Heart left ventricle (tissue), 16 donors: ENCODE measurements at regions of chr3 and their contacts with region 1.

Region 1: GRCh38 chr3:56347219-56347871 is 120.9 kb downstream of the ERC2 start:
- DNase-seq: peak in 1 of 5 donors; percentile 10
- ATAC-seq: no peak
- H3K4me3 ChIP-seq: no peak overlapping the region
- H3K27ac ChIP-seq: no peak overlapping the region
- H3K4me1 ChIP-seq: no peaks in the 10 kb centered on the region
- H3K27me3 ChIP-seq: peaks cover 0 to 5% (median 0%) of the 10 kb centered on the region in 9 donors
- CTCF ChIP-seq: peak in 6 of 12 donors; percentile 13 to 42 (median 17)
- POLR2A ChIP-seq: no peak

Region 2: GRCh38 chr3:56443372-56443771 is 96.0 kb after region 1 on chr3:
- intact Hi-C with region 1: loop called in 3 of 10 experiments (anchors 5 to 10 kb)
- DNase-seq: no peak
- ATAC-seq: no peak
- H3K4me3 ChIP-seq: no peak overlapping the region
- H3K27ac ChIP-seq: no peak overlapping the region
- H3K4me1 ChIP-seq: no peaks in the 10 kb centered on the region
- H3K27me3 ChIP-seq: peaks cover 0 to 5% (median 0%) of the 10 kb centered on the region in 9 donors
- CTCF ChIP-seq: no peak
- POLR2A ChIP-seq: no peak

Region 3: DNA sequence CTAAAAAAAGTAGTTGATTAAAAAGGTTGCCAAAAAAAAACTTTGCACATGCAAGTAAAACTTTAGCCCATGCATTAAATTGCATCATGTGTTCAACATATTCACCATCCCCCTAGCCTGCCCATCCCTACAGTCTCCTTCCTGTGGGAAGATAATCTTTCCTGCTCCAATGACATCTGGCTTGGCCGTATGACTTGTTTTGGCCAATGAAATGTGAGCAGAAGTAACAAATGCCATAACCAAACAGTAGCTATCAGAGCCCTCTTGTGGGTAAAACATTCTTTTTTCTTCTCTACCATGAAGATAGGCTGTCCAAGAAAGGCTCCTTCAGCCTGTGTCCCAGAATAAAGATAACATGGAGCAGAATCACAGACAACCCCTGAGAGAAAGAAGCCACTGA is 105.7 kb after region 1 on chr3:
- intact Hi-C with region 1: loop called in 3 of 10 experiments (anchors 5 to 10 kb)
- DNase-seq: no peak
- ATAC-seq: no peak
- H3K4me3 ChIP-seq: no peak overlapping the region
- H3K27ac ChIP-seq: no peak overlapping the region
- H3K4me1 ChIP-seq: no peaks in the 10 kb centered on the region
- H3K27me3 ChIP-seq: peaks cover 0 to 9% (median 0%) of the 10 kb centered on the region in 9 donors
- CTCF ChIP-seq: no peak
- POLR2A ChIP-seq: no peak

Region 4: GRCh38 chr3:56494686-56495322 is 147.5 kb after region 1 on chr3:
- intact Hi-C with region 1: loop called in 3 of 10 experiments (anchors 5 kb)
- DNase-seq: peak; percentile 71 to 81 (median 76)
- ATAC-seq: peak; percentile 82 to 90 (median 86)
- H3K4me3 ChIP-seq: no peak overlapping the region
- H3K27ac ChIP-seq: no peak overlapping the region
- H3K4me1 ChIP-seq: no peaks in the 10 kb centered on the region
- H3K27me3 ChIP-seq: peaks cover 0 to 11% (median 0%) of the 10 kb centered on the region in 9 donors
- CTCF ChIP-seq: peak; percentile 83 to 95 (median 91)
- POLR2A ChIP-seq: no peak

Region 5: GRCh38 chr3:56633602-56634535 is 286.5 kb after region 1 on chr3:
- intact Hi-C with region 1: no loop called
- DNase-seq: peak in 4 of 5 donors; percentile 52 to 75 (median 64)
- ATAC-seq: peak; percentile 95 to 98 (median 96)
- H3K4me3 ChIP-seq: no peak overlapping the region
- H3K27ac ChIP-seq: peak overlapping the region in 5 of 12 donors; percentile 12 to 36 (median 33)
- H3K4me1 ChIP-seq: peaks cover 0 to 16% (median 6%) of the 10 kb centered on the region in 12 donors
- H3K27me3 ChIP-seq: no peaks in the 10 kb centered on the region
- CTCF ChIP-seq: no peak
- POLR2A ChIP-seq: no peak